Posterior cingulate gyrus (tissue), 11 donors: ENCODE measurements at regions of chr5 and their contacts with region 1.

Region 1: GRCh38 chr5:120803282-120803681 is 339.2 kb downstream of the PRR16 start:
- DNase-seq: no peak

Region 2: DNA sequence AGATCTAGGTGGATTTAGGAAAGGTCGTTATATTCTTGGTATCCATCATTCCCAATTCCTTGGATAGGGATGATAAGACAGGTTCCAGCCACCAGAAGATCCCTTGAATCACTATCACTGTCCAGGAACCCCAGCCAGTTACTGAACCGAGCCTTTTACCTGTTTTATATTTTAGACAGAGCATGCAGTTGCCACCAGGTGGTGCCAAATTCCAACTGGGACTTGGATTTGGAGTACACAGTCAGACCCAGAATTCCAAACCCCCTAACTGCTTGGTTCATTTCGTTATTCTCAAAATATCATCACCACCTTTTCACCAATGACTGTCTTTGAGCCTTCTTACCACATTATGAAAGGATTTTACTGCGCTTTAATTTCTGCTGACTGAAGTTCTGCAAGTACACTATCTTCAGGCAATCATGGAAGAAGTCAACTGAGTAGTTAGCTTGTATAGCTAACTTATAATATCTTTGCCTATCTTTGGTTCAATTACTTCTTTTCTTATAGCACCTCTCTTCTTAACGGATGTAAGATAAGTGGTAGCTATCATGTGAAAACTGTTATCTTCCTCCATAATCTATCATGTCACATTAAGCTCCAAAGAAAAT is 147.3 kb before region 1 on chr5:
- intact Hi-C with region 1: loop called (anchors 5 kb)
- DNase-seq: peak in 3 of 10 donors; percentile 19 to 67 (median 25)